Transverse colon (tissue), 4 donors: ENCODE measurements at regions of chr1 and their contacts with region 1.

Region 1: DNA sequence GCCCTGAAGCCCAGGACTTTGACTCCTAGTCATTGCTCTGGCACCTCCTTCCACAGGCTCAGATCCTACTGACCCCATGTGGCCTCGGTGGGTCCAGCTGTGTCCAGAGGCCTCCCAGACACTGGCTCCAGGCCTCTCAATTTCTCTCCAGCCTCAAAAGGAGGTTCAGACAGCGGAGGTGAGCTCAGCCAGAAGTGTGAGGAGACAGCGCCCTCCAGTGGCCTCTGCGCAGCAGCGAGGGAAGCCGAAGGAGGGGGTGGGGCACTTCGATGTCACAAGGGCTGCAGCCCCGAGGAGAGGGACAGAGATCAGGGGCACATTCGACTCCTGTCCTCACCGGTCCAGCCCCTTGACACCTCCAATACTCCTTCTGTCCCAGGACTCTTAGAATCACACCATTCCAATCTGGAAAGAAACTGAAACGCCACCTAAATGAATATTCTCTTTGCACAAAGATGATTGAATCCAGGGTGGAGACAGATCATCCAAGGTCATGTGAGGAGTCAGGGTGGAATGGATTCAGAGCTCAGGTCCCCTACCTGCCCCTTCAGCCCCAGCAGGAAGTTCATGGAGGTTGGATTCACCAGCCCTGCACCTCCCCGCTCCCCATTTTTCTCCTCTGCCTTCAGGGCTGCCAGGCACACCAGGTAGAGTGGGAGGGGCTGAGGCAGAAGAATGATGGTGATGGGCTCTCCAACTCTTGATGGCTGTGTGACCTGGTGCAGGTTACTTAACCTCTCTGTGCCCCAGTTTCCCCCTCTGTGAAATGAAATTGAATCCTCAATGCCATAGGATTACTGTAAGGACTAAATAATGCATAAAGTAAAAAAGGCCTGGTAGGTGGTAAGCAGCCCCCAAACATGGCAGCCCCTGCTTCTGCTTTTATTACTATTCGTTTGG is 34.8 kb upstream of the ZBTB40 start:
- DNase-seq: peak; percentile 77
- H3K4me3 ChIP-seq: no peak overlapping the region
- H3K27ac ChIP-seq: no peak overlapping the region
- H3K4me1 ChIP-seq: peaks cover 0 to 16% (median 2%) of the 10 kb centered on the region in 4 donors
- H3K27me3 ChIP-seq: peaks cover 26% of the 10 kb centered on the region
- CTCF ChIP-seq: peak; percentile 72 to 93 (median 88)
- EP300 ChIP-seq: no peak
- POLR2A ChIP-seq: no peak

Region 2: DNA sequence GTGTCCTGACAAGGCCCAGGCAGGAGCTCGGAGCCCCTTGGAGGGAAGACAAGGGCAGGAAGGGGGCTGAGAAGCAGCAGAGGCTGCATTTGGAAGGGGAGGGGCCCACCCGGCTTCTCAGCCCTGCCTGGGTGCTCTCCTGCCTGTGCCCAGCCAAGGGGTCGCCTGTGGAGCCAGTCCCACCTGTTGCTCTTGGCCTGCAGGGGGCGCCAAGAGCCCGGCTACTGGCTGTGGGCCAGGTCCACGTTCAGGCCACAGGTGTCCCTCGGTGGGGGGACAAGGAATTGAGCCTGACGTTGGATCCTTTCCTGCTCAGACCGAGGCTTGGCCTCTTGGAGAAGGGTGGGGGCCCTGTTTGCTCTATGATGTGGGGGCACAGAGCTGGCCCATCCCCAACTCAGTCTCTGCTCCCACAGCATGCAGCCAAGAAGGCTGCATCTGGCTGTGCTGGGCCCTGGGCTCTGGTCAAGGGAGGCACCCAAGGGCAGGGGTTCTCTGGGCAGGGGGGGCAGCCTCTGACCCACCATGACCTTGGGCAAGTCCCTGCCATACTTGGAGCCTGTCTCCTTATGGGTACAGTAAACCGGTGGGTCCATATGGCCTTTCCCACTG is 284.8 kb before region 1 on chr1:
- in situ Hi-C with region 1: loop called in 3 of 4 experiments (anchors 10 to 25 kb)
- intact Hi-C with region 1: no loop called
- DNase-seq: peak; percentile 59
- H3K4me3 ChIP-seq: no peak overlapping the region
- H3K27ac ChIP-seq: no peak overlapping the region
- H3K4me1 ChIP-seq: peaks cover 0 to 6% (median 2%) of the 10 kb centered on the region in 4 donors
- H3K27me3 ChIP-seq: no peaks in the 10 kb centered on the region
- CTCF ChIP-seq: peak; percentile 77 to 89 (median 79)
- EP300 ChIP-seq: no peak
- POLR2A ChIP-seq: no peak

Region 3: DNA sequence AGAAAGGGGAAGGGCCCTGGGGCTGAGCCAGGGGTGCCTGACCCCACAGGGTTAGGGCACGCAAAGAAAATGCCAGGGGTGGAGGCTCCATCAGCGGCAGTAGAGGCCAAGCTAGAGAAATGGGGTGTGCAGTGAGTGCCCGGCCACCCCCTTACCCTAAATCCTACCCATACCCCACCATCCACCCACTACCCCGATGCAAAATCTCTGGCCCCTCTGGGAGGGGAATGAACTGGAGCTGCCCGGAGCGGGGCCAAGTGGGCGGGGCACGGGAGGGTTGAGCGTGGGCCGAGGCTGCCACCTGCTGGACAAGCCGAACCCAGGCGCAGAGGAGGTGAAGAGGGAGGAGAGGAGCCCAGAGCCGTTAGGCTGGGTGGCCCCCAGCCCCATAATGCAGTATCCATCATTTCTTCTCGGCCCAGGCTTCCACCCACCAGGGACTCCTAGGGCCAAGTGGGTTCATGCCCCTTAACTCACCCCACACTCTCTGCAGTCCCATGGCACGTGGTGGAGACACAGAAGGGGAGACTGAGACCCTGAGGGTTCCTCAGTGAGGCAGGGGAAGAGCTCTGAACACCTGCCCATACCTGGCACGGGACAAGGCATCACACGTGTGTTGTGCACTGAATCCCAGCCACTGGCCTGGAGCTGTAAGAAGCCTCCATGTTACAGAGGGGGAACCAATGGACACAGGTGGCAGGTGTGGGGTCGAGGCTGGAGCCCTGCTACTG is 225.3 kb after region 1 on chr1:
- in situ Hi-C with region 1: loop called (anchors 5 to 10 kb)
- intact Hi-C with region 1: loop called (anchors 1 kb)
- DNase-seq: peak; percentile 82
- H3K4me3 ChIP-seq: no peak overlapping the region
- H3K27ac ChIP-seq: no peak overlapping the region
- H3K4me1 ChIP-seq: no peaks in the 10 kb centered on the region
- H3K27me3 ChIP-seq: no peaks in the 10 kb centered on the region
- CTCF ChIP-seq: peak; percentile 81 to 92 (median 91)
- EP300 ChIP-seq: no peak
- POLR2A ChIP-seq: no peak

Region 4: GRCh38 chr1:22930235-22930912 is 513.6 kb after region 1 on chr1:
- in situ Hi-C with region 1: loop called in 1 of 4 experiments (anchors 25 kb)
- intact Hi-C with region 1: no loop called
- DNase-seq: peak; percentile 43
- H3K4me3 ChIP-seq: no peak overlapping the region
- H3K27ac ChIP-seq: no peak overlapping the region
- H3K4me1 ChIP-seq: no peaks in the 10 kb centered on the region
- H3K27me3 ChIP-seq: peaks cover 6% of the 10 kb centered on the region
- CTCF ChIP-seq: peak; percentile 55 to 75 (median 69)
- EP300 ChIP-seq: no peak
- POLR2A ChIP-seq: no peak